IMR-90 (cell line): ENCODE measurements at regions of chr1 and their contacts with region 1.

Region 1: GRCh38 chr1:17125756-17126237 is 6.5 kb upstream of the PADI2 start:
- DNase-seq: peak; percentile 68
- ATAC-seq: peak; percentile 78
- H3K4me3 ChIP-seq: no peak overlapping the region
- H3K27ac ChIP-seq: no peak overlapping the region; the same call in 1 of the 2 replicates
- H3K4me1 ChIP-seq: peaks cover 17% of the 10 kb centered on the region
- H3K27me3 ChIP-seq: no peaks in the 10 kb centered on the region; the same call in 1 of the 2 replicates
- CTCF ChIP-seq: peak; percentile 99
- POLR2A ChIP-seq: 0 out of 2 replicates have a peak, but pooled peaks have one; percentile 42
- RAD21 ChIP-seq: peak; percentile 98

Region 2: GRCh38 chr1:17059739-17060460 is 65.9 kb before region 1 on chr1:
- CTCF ChIA-PET with region 1: interaction called, 11 read pairs
- POLR2A ChIA-PET with region 1: no interaction called
- dilution Hi-C with region 1: no loop called
- in situ Hi-C with region 1: no loop called
- intact Hi-C with region 1: loop called (anchors 1 kb)
- DNase-seq: peak; percentile 71
- ATAC-seq: peak; percentile 93
- H3K4me3 ChIP-seq: no peak overlapping the region
- H3K27ac ChIP-seq: no peak overlapping the region
- H3K4me1 ChIP-seq: no peaks in the 10 kb centered on the region
- H3K27me3 ChIP-seq: no peaks in the 10 kb centered on the region
- CTCF ChIP-seq: peak; percentile 91
- POLR2A ChIP-seq: no peak
- RAD21 ChIP-seq: peak; percentile 95

Region 3: DNA sequence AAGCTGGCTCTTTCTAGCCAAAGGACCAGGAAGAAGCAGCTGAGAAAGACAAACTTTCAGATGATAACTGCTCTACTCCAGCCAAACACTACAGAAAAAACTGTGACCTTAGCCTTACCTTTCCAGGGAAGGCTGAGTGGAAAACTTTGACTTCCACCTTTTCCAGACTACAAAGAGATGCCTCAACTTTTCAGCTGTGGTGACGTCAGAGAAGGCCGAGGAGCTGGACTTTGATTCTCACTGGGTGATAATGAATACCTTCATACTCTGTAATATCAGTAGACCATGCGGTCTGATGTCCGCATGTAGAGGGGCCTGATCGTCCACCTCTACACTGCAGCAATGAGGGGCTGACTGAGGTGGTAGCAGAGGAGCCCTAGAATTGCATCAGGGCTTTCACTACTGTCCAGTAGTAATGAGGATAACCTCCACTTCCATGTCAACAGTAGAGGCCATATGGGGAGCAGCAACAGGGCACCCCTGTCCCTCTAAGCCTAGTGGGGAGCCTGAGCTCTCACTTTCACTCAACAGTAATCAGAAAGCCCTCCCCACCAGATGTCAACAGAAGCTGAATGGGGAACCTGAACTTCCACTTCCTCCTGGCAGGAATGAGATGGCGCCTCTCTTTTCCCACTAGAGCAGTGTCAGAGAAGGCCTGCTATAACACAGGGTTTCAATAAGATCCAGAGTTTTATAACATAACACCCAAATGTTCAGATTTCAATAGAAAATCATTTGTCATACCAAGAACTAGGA is 50.7 kb after region 1 on chr1:
- CTCF ChIA-PET with region 1: no interaction called
- POLR2A ChIA-PET with region 1: no interaction called
- dilution Hi-C with region 1: no loop called
- in situ Hi-C with region 1: no loop called
- intact Hi-C with region 1: no loop called
- DNase-seq: no peak
- ATAC-seq: no peak
- H3K4me3 ChIP-seq: no peak overlapping the region
- H3K27ac ChIP-seq: no peak overlapping the region
- H3K4me1 ChIP-seq: no peaks in the 10 kb centered on the region
- H3K27me3 ChIP-seq: no peaks in the 10 kb centered on the region
- CTCF ChIP-seq: no peak
- POLR2A ChIP-seq: no peak
- RAD21 ChIP-seq: no peak

Region 4: GRCh38 chr1:17190010-17190995 is 64.5 kb after region 1 on chr1:
- CTCF ChIA-PET with region 1: no interaction called
- POLR2A ChIA-PET with region 1: no interaction called
- dilution Hi-C with region 1: no loop called
- in situ Hi-C with region 1: no loop called
- intact Hi-C with region 1: loop called (anchors 1 kb)
- DNase-seq: peak; percentile 92
- ATAC-seq: peak; percentile 96
- H3K4me3 ChIP-seq: no peak overlapping the region
- H3K27ac ChIP-seq: peak overlapping the region; percentile 94
- H3K4me1 ChIP-seq: peaks cover 9% of the 10 kb centered on the region
- H3K27me3 ChIP-seq: no peaks in the 10 kb centered on the region
- CTCF ChIP-seq: no peak
- POLR2A ChIP-seq: no peak
- RAD21 ChIP-seq: no peak

Region 5: DNA sequence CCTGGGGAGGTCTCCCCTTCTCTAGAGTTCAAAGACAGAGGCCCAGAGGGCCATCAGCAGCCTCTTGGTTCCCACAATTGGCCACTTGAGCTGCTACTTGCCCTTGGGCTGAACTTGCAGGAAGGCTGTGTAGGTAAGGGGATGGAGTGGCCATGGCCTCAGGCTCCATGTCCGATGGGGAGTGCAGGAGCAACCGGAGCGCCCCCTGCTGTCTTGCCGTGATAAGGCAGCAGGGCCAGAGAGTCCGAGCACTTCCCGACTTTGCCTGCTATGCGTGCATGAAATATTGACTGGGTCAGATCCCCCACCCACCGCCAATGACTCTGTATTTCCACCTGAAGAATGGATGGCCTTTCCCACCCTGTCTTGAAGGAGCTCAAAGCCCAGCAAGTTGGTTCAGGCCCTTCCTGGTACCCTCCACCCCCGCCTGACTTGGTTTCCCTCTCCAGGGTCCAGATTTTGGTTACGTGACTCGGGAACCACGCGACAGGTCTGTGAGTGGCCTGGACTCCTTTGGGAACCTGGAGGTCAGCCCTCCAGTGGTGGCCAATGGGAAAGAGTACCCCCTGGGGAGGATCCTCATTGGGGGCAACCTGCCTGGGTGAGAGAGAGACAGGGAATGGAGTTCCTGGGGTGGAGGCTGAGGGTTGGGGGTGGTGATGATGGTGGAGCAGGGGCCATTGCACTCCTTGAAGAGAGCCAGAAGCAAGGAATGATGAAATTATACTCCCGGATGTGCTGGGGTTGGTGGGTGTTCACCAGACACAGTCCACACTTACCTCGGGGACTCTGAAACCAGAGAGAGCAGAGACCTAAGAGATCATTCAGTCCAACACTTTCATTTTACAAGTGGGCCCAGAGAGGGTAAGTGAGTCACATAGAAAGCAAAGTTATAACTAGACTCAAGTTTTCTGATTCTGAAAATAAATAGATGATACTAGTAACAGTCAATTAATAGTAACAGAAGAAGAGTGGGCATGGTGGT is 148.7 kb after region 1 on chr1:
- CTCF ChIA-PET with region 1: interaction called, 3 read pairs
- POLR2A ChIA-PET with region 1: no interaction called
- dilution Hi-C with region 1: no loop called
- in situ Hi-C with region 1: no loop called
- intact Hi-C with region 1: loop called (anchors 1 kb)
- DNase-seq: peak; percentile 29
- ATAC-seq: peak; percentile 85
- H3K4me3 ChIP-seq: no peak overlapping the region
- H3K27ac ChIP-seq: no peak overlapping the region
- H3K4me1 ChIP-seq: no peaks in the 10 kb centered on the region
- H3K27me3 ChIP-seq: peaks cover 21% of the 10 kb centered on the region
- CTCF ChIP-seq: peak; percentile 63
- POLR2A ChIP-seq: no peak
- RAD21 ChIP-seq: peak; percentile 68

Region 6: DNA sequence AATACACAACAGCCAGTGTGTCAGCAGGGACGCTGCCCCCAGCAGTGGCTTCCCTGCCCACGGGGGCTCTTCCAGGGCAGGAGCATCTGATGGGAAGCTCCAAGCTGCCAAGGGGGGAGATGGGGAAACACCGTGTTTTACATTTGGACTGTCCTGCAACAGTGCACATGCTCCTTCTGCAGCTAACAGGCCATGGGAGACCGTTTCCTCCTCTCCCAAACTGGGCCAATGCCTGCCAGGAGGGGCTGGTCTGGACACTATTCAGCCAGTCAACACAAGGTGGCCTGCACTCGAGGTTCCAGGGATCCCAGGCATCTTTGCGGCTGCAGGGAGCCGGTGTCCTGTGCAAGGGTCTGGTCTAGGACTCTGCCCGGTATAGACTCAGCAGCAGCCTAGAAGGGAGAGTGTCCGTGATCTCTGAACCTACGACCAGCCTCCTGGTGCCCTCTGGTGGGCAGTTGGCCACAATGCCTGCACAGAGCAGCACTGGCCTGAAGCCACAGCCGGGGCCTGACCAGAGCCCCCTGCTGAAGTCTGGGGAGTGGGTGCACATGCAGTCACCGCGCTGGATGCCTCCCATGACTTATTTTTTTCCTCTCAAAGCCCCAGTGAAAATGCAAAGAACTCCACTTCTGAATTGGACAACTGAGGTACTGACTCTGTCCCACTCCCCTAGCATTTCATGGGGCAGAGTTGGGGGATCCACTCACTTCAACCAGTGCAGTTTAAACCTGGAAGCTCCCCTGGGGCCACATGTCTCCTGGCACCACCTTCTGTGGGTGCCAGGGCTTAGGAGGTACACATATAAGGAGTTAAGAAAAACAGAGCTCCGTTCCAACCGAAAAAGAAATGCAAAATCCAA is 280.3 kb after region 1 on chr1:
- CTCF ChIA-PET with region 1: no interaction called
- POLR2A ChIA-PET with region 1: no interaction called
- dilution Hi-C with region 1: no loop called
- in situ Hi-C with region 1: loop called (anchors 5 kb)
- intact Hi-C with region 1: loop called (anchors 1 kb)
- DNase-seq: peak; percentile 44
- ATAC-seq: peak; percentile 93
- H3K4me3 ChIP-seq: no peak overlapping the region
- H3K27ac ChIP-seq: no peak overlapping the region
- H3K4me1 ChIP-seq: peaks cover 2% of the 10 kb centered on the region; the same call in 1 of the 2 replicates
- H3K27me3 ChIP-seq: no peaks in the 10 kb centered on the region
- CTCF ChIP-seq: peak; percentile 67
- POLR2A ChIP-seq: no peak
- RAD21 ChIP-seq: peak; percentile 65